Posterior cingulate gyrus (tissue), 11 donors: ENCODE measurements at regions of chr12 and their contacts with region 1.

Region 1: DNA sequence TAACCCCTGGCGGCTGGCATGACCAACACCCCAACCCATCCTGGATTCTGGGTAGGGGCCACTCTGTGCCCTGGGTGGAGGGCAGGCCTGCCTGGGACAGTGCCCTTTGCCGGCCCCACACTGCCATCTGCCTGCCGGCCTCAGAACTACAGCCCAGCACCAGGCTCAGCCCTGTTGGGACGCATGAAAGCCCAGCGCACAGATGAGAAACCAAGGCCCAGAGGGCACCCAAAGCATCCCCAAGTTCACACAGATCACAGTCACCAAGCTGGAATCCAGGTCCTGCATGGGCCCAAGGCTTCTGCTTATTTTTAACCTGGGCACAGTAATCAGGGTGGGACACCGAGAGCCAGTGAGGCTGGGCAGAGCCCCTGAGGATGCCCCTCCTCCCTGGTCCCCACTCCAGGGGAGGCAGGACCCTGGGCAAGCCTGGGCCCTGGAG is 26.2 kb downstream of the RFLNA start:
- DNase-seq: peak; percentile 58 to 96 (median 82)

Region 2: DNA sequence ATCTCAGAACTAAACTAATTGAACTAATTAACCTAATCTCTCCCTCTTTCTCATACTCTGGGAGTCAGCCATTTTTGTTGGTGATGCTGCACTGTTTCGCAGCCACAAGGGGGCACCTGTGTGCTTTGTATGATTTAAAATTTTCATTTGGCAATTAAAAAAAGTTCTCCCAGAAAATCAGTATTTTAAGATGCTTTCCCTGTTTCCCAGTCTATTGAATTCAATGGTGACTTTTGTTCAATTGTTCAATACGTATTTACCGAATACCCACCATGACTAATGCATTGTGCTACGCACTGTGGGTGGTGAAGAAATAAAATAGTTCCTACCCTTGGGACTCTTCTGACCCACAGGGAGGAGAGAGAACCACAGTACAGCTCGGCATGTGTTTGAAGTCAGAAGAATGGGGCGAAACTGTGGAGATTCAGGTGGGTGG is 284.4 kb before region 1 on chr12:
- intact Hi-C with region 1: loop called (anchors 2 kb)
- DNase-seq: peak in 6 of 10 donors; percentile 49 to 89 (median 58)

Region 3: GRCh38 chr12:124044809-124045321 is 276.2 kb before region 1 on chr12:
- intact Hi-C with region 1: loop called (anchors 2 kb)
- DNase-seq: no peak